GM12878 (cell line): ENCODE measurements at regions of chr12 and their contacts with region 1.

Region 1: DNA sequence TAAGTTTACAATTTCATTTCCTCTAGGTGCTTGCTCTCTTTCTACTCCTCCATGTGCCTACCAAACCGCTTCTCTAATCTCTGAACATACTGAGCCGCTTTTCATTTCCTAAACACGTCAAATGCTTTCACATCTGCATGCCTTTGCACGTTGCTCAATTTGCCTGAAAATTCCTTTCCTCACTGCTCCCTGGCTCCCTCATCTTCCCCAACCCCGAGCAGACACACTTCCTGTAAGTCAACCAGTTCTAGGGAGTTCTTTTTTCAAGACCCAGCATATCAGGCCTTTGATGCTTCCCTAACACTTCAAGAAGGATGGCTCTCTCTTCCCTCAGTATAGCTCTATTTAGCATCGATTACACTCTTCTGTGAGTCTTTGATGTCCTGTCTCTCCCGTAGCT is 50.3 kb downstream of the LMO3 start:
- DNase-seq: no peak
- ATAC-seq: no peak
- H3K4me3 ChIP-seq: no peak overlapping the region
- H3K27ac ChIP-seq: no peak overlapping the region
- H3K4me1 ChIP-seq: no peaks in the 10 kb centered on the region
- H3K27me3 ChIP-seq: no peaks in the 10 kb centered on the region
- CTCF ChIP-seq: no peak
- EP300 ChIP-seq: no peak
- POLR2A ChIP-seq: no peak
- RAD21 ChIP-seq: no peak

Region 2: GRCh38 chr12:16568873-16569272 is 13.2 kb after region 1 on chr12:
- CTCF ChIA-PET with region 1: interaction called, 5 read pairs
- POLR2A ChIA-PET with region 1: interaction called, 3 read pairs
- RAD21 ChIA-PET with region 1: interaction called, 3 read pairs
- SMC1A ChIA-PET with region 1: interaction called, 13 read pairs
- in situ Hi-C with region 1: no loop called
- intact Hi-C with region 1: no loop called
- DNase-seq: peak; percentile 25
- ATAC-seq: peak; percentile 89
- H3K4me3 ChIP-seq: no peak overlapping the region
- H3K27ac ChIP-seq: no peak overlapping the region
- H3K4me1 ChIP-seq: no peaks in the 10 kb centered on the region
- H3K27me3 ChIP-seq: no peaks in the 10 kb centered on the region
- CTCF ChIP-seq: no peak
- EP300 ChIP-seq: 0 out of 4 replicates have a peak, but pooled peaks of 1 of the 2 experiments have one; percentile 22
- POLR2A ChIP-seq: no peak
- RAD21 ChIP-seq: no peak